CD4-positive, alpha-beta T cell (primary cell): ENCODE measurements at regions of chr5 and their contacts with region 1.

Region 1: GRCh38 chr5:170262061-170263045 is 29.6 kb downstream of the C5orf58 start:
- DNase-seq: peak in 9 of 14 experiments; percentile 40 to 88 (median 61)
- ATAC-seq: peak; percentile 88
- H3K4me3 ChIP-seq: peak overlapping the region; percentile 11
- H3K4me3 Mint-ChIP-seq: peak overlapping the region; percentile 52
- H3K27ac ChIP-seq: peak overlapping the region; percentile 62 to 88
- H3K27ac Mint-ChIP-seq: peak overlapping the region; percentile 96
- H3K4me1 ChIP-seq: peaks cover 63% of the 10 kb centered on the region
- H3K4me1 Mint-ChIP-seq: peaks cover 91% of the 10 kb centered on the region
- H3K27me3 ChIP-seq: no peaks in the 10 kb centered on the region
- H3K27me3 Mint-ChIP-seq: no peaks in the 10 kb centered on the region
- CTCF ChIP-seq: no peak

Region 2: DNA sequence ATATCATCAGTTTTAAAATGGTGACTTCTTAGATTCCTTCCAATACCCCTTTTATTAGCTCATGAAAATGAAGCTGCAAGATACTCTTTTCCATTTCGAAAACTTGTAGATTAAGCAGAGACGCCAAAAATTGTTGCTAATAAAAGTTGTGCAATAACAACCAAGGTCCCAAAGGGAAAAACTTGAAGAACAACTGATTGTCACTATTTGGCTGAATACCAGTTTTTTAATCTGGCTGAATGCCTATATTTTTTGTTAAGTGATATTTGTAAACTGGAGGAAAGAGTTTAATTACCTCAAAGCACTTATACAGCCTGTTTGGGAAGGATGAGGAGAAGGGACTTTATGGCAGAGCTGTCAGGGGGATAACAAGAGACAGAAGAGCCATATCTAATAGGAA is 15.0 kb before region 1 on chr5:
- CTCF ChIA-PET with region 1: interaction called, 6 read pairs
- POLR2A ChIA-PET with region 1: interaction called, 14 read pairs
- intact Hi-C with region 1: no loop called
- DNase-seq: no peak
- ATAC-seq: no peak
- H3K4me3 ChIP-seq: no peak overlapping the region
- H3K4me3 Mint-ChIP-seq: no peak overlapping the region
- H3K27ac ChIP-seq: no peak overlapping the region
- H3K27ac Mint-ChIP-seq: no peak overlapping the region
- H3K4me1 ChIP-seq: peaks cover 4% of the 10 kb centered on the region
- H3K4me1 Mint-ChIP-seq: peaks cover 14% of the 10 kb centered on the region
- H3K27me3 ChIP-seq: no peaks in the 10 kb centered on the region
- H3K27me3 Mint-ChIP-seq: no peaks in the 10 kb centered on the region
- CTCF ChIP-seq: no peak

Region 3: GRCh38 chr5:170287532-170287931 is 25.2 kb after region 1 on chr5:
- CTCF ChIA-PET with region 1: interaction called, 22 read pairs
- POLR2A ChIA-PET with region 1: interaction called, 112 read pairs
- intact Hi-C with region 1: no loop called
- DNase-seq: peak in 3 of 14 experiments; percentile 50 to 55 (median 51)
- ATAC-seq: no peak
- H3K4me3 ChIP-seq: no peak overlapping the region
- H3K4me3 Mint-ChIP-seq: peak overlapping the region; percentile 47
- H3K27ac ChIP-seq: peak overlapping the region; percentile 62 to 63
- H3K27ac Mint-ChIP-seq: peak overlapping the region; percentile 96
- H3K4me1 ChIP-seq: peaks cover 94% of the 10 kb centered on the region
- H3K4me1 Mint-ChIP-seq: peaks cover 100% of the 10 kb centered on the region
- H3K27me3 ChIP-seq: no peaks in the 10 kb centered on the region
- H3K27me3 Mint-ChIP-seq: no peaks in the 10 kb centered on the region
- CTCF ChIP-seq: no peak

Region 4: GRCh38 chr5:170293273-170293672 is 30.9 kb after region 1 on chr5:
- CTCF ChIA-PET with region 1: interaction called, 22 read pairs
- POLR2A ChIA-PET with region 1: interaction called, 112 read pairs
- intact Hi-C with region 1: no loop called
- DNase-seq: peak in 5 of 14 experiments; percentile 39 to 83 (median 74)
- ATAC-seq: peak; percentile 10
- H3K4me3 ChIP-seq: peak overlapping the region; percentile 66
- H3K4me3 Mint-ChIP-seq: peak overlapping the region; percentile 98
- H3K27ac ChIP-seq: peak overlapping the region; percentile 49 to 98
- H3K27ac Mint-ChIP-seq: peak overlapping the region; percentile 96
- H3K4me1 ChIP-seq: peaks cover 66% of the 10 kb centered on the region
- H3K4me1 Mint-ChIP-seq: peaks cover 82% of the 10 kb centered on the region
- H3K27me3 ChIP-seq: no peaks in the 10 kb centered on the region
- H3K27me3 Mint-ChIP-seq: no peaks in the 10 kb centered on the region
- CTCF ChIP-seq: no peak

Region 5: DNA sequence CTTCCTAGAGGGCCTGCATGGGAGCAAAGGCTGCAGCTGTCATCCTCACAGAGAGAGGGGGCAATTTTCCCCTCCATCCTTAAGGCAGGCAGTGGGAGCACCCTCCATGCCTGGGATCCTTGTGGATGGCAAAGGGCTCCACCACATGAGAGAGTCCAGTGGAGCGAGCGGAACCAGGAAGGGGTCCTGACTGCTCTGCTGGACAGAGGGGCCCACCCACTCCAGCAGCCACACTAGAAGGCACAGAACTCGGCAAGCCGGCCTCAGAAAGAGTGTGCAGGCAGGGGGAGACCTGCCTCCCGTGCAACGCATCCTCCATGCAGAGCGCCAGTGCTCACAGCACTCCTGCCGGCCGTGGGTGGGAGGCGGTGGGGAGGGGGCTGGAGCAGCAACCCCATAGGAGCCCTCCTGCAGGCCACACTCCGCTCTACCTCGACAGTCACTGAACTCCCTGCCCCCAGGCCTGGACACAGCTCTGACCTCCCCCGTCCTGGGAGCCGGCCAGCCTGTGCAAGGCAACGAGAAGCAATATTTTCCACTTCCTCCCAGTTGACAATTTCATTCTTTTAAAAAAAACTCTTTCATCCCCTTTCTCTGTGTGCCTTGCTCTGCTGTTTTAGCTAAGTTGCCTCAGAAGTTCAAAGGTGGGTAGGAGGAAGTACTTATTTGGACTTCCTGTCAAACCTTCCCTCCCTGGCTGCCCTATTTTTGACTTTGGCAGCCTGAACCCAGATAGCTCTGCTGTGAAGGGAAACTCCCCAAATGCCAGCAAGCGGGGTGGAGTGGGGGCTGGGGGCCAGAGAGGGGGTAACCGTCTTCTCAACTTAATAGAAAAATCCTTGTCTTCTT is 40.5 kb after region 1 on chr5:
- CTCF ChIA-PET with region 1: interaction called, 18 read pairs
- POLR2A ChIA-PET with region 1: interaction called, 112 read pairs
- intact Hi-C with region 1: loop called in 1 of 2 experiments (anchors 5 kb)
- DNase-seq: peak; percentile 36 to 96 (median 58)
- ATAC-seq: peak; percentile 95
- H3K4me3 ChIP-seq: peak overlapping the region; percentile 47
- H3K4me3 Mint-ChIP-seq: peak overlapping the region; percentile 87
- H3K27ac ChIP-seq: peak overlapping the region; percentile 88 to 92
- H3K27ac Mint-ChIP-seq: peak overlapping the region; percentile 96
- H3K4me1 ChIP-seq: peaks cover 82% of the 10 kb centered on the region
- H3K4me1 Mint-ChIP-seq: peaks cover 87% of the 10 kb centered on the region
- H3K27me3 ChIP-seq: no peaks in the 10 kb centered on the region
- H3K27me3 Mint-ChIP-seq: no peaks in the 10 kb centered on the region
- CTCF ChIP-seq: peak; percentile 27

Region 6: DNA sequence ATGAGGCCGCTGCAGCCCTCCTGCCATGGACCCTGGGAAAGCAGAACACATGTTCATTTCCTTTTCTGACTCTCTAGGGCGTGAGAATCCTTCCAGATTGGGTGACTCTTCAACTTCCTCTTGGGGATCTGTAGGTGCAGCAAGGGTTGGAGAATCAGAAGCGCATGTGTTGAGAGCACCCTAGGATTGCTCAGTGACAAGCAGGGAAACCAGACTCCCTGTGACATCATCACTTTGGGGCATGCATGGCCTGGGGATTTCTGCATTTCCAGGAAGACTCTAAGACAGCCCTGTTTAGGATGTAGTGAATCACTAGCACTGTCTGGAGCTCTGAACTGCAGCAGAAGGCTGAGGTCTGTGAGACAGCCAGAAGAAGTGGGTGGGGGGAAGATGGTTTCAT is 50.3 kb after region 1 on chr5:
- CTCF ChIA-PET with region 1: interaction called, 3 read pairs
- POLR2A ChIA-PET with region 1: interaction called, 14 read pairs
- intact Hi-C with region 1: no loop called
- DNase-seq: peak in 8 of 14 experiments; percentile 44 to 92 (median 61)
- ATAC-seq: peak; percentile 87
- H3K4me3 ChIP-seq: peak overlapping the region; percentile 6
- H3K4me3 Mint-ChIP-seq: peak overlapping the region; percentile 71
- H3K27ac ChIP-seq: peak overlapping the region; percentile 80 to 83
- H3K27ac Mint-ChIP-seq: peak overlapping the region; percentile 91
- H3K4me1 ChIP-seq: peaks cover 56% of the 10 kb centered on the region
- H3K4me1 Mint-ChIP-seq: peaks cover 87% of the 10 kb centered on the region
- H3K27me3 ChIP-seq: no peaks in the 10 kb centered on the region
- H3K27me3 Mint-ChIP-seq: no peaks in the 10 kb centered on the region
- CTCF ChIP-seq: no peak